Common myeloid progenitor, CD34-positive (primary cell): ENCODE measurements at regions of chr13 and their contacts with region 1.

Region 1: DNA sequence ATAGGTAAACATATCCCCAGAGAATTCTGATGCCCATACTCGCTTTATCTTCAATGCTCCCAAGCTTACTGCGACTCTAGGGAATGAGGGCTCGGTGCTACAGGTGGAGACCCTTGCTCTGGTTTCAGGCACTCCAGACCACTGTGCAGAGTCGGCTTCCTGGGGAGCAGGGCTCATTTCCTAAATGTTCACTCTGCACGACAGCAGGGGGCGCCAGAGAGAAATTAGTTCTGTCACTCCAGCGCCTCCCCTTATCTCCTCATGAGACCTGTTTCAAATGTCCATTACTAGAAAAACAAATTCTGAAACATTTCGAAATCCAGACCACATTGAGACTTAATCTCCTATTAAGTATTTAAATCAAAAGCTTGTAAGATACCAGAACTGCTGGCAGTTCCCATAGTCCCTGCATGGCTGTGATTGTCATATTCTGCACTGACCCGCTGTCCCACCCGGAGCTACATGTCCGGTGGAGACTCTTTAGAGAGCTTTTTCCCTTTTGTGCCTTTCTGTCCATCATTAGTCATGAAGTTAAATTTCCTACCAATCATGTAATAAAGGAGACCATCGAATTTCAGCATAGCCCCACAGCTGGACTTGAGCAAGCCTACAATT is 22.4 kb downstream of the EPSTI1 start:
- DNase-seq: peak; percentile 76 to 84 (median 83)
- H3K4me3 ChIP-seq: no peak overlapping the region
- H3K27ac ChIP-seq: no peak overlapping the region
- H3K4me1 ChIP-seq: peaks cover 0 to 12% (median 8%) of the 10 kb centered on the region in 4 experiments
- H3K27me3 ChIP-seq: no peaks in the 10 kb centered on the region

Region 2: DNA sequence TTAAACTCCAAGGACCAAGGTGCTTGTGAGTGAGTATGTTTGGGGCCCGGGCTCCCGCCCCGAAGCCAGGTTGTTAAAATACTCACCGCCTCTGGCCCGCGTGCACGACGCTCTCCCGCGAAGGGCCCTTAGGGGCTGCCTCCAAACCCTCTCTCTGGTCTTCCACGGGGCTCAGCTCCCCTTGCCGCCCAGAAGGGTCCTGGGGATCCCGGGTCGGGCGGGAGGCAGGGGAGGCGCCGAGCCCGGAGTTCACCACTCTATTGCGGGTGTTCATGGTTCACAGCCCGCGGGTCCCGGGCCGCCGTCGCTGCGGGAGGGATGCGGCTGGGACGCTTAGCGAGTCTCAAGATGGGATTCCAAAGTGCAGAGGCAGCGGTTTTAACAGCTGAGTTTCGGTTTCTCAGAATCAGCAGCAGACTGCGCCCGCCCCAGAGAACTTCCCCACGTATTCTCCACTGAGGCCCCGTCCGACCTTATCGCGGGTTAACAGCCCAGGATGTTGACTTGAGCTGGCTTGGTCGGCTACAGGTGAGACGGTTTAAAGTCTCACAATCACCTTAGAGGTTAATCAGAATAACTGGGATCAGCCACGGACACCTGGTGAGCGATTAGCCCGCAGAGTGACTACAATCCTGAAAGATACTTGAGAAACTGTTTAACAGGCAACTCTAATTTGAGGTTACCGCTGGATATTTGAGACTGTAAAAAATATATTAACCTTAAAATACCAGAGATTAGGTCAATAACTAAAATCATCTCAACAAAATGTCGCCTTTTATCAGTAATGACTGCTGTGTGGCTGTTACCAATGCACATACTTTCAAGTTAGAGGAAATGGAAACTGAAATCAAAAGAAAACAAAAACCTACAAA is 22.5 kb after region 1 on chr13 and contains the start of gene EPSTI1:
- CTCF ChIA-PET with region 1: interaction called, 22 read pairs
- POLR2A ChIA-PET with region 1: interaction called, 4 read pairs
- DNase-seq: peak; percentile 76 to 94 (median 91)
- H3K4me3 ChIP-seq: peak within 1 kb of the TSS; percentile 64 to 87 (median 82)
- H3K27ac ChIP-seq: peak within 1 kb of the TSS; percentile 73 to 95
- H3K4me1 ChIP-seq: peaks cover 16 to 30% (median 21%) of the 10 kb centered on the region in 4 experiments
- H3K27me3 ChIP-seq: no peaks in the 10 kb centered on the region

Region 3: GRCh38 chr13:43005460-43006236 is 36.0 kb after region 1 on chr13:
- CTCF ChIA-PET with region 1: no interaction called
- POLR2A ChIA-PET with region 1: no interaction called
- DNase-seq: no peak
- H3K4me3 ChIP-seq: no peak overlapping the region
- H3K27ac ChIP-seq: no peak overlapping the region
- H3K4me1 ChIP-seq: peaks cover 2 to 7% (median 6%) of the 10 kb centered on the region in 4 experiments
- H3K27me3 ChIP-seq: no peaks in the 10 kb centered on the region

Region 4: GRCh38 chr13:43085545-43085944 is 115.9 kb after region 1 on chr13:
- CTCF ChIA-PET with region 1: interaction called, 14 read pairs
- POLR2A ChIA-PET with region 1: no interaction called
- DNase-seq: peak; percentile 34 to 71 (median 63)
- H3K4me3 ChIP-seq: no peak overlapping the region
- H3K27ac ChIP-seq: no peak overlapping the region
- H3K4me1 ChIP-seq: peaks cover 0 to 4% (median 0%) of the 10 kb centered on the region in 4 experiments
- H3K27me3 ChIP-seq: no peaks in the 10 kb centered on the region

Region 5: DNA sequence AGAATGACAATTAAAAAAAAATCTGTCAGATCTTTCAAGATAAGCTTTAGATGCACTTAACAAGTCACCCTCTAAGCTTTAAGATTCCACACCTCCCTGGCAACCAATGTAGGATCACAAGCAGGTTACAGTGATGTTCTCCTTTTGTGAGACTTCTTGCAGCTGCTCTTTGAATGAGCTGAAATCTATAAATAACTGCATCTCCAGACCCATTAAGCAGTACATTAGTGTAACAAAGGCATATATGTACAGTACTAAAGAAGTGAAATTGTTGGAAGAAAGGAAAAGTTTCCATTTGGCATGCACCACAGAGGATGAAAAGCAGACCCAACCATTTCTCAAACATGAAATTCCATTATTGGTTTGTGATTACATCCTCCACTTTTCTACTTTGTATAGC is 452.5 kb after region 1 on chr13:
- CTCF ChIA-PET with region 1: no interaction called
- POLR2A ChIA-PET with region 1: no interaction called
- DNase-seq: no peak
- H3K4me3 ChIP-seq: no peak overlapping the region
- H3K27ac ChIP-seq: no peak overlapping the region
- H3K4me1 ChIP-seq: no peaks in the 10 kb centered on the region
- H3K27me3 ChIP-seq: no peaks in the 10 kb centered on the region